BJ (cell line): ENCODE measurements at regions of chr17 and their contacts with region 1.

Region 1: DNA sequence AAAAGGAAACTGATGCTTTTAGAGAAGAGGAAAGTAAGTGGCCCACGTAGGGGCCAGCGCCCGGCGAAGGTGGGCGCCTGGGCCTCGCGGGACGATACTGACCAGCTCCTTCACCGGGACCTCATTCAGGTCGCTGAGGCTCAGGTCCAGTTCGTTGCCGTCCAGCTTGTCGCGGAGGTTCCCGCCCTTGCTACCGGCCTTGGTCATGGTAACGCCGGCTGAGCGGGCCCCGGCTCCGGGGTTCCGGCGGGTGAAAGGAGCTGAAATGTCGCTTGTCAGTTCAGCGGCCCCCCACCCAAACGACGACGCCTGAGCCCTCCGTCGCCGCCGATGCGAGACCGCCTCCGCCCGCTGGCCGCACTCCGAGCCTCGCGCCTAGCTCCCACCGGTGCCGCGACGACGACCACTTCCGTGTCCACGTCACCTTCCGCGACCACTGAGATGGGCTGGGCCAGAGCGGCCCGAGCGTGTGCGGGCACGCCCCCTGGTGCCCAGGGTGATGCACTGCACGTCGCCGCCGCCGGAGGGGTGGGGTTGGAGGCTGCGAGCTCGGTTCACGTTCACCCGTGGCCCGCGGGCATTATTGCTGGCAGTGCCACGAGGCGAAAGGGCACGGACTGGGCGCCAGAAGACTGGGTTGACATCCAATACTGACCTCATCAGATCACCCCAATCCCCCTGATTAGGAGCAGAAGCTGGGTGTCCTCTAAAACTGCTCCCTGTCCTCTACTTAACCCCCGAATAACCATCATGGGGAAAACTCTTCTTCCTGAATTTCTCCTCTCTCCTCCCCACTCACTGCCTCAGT is at the start of gene LRRC59:
- DNase-seq: peak; percentile 24
- H3K4me3 ChIP-seq: peak within 1 kb of the TSS; percentile 97
- H3K27me3 ChIP-seq: no peaks in the 10 kb centered on the region
- CTCF ChIP-seq: peak; percentile 98
- polyA plus RNA-seq, gene LRRC59: 110 and 119 TPM in 2 replicates

Region 2: GRCh38 chr17:50037321-50038071 is 359.8 kb before region 1 on chr17:
- CTCF ChIA-PET with region 1: no interaction called
- POLR2A ChIA-PET with region 1: no interaction called
- DNase-seq: no peak
- H3K4me3 ChIP-seq: no peak overlapping the region
- H3K27me3 ChIP-seq: no peaks in the 10 kb centered on the region
- CTCF ChIP-seq: no peak

Region 3: DNA sequence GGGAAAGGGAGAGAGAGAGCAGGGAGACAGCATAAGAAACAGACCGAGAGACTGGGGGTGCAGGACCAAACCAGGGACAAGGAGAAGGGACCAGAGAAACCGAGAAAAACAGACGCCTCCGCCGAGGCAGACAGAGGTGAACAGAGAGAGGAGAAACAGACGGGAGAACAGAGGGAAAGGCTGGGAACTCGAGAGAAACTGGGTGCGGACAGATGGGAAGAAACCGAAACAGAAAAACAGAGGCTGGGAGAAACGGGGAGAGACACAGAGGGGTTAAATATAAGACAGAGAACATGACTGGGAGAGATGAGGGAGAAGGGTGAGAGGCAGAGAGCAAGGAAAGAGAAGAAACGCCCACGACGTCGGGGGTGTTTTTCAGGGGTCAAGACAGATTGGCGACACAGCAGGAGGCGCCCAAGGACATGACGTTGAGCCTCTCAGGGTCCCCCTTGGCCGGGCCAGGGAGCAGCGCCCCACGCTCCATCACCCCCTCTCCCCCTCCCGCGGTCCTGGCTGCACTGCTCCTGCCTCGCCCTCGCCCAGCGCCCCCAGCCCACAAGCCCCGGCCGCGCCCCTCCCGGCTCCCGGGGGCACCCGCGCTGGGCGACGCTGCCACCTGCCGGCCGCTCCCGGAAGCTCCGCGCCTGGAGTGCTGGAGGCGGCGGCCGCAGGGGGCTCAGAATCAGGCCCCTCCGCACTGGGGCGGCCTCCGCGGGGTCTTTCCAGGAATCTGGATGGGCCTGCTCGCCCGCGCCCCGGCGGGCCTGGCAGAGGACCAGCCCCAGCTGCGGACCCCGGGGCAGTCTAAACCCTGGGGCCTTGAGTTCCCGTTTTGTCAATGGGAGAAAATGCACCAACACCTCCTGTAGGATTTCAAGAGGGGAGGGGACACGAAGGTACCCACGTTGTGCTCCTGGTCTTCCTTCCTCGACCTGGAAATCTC is 124.3 kb before region 1 on chr17:
- CTCF ChIA-PET with region 1: no interaction called
- POLR2A ChIA-PET with region 1: no interaction called
- DNase-seq: no peak
- H3K4me3 ChIP-seq: peak overlapping the region; percentile 51
- H3K27me3 ChIP-seq: no peaks in the 10 kb centered on the region
- CTCF ChIP-seq: peak; percentile 34; the same call in 1 of the 2 replicates

Region 4: GRCh38 chr17:50361561-50362480 is 35.5 kb before region 1 on chr17:
- CTCF ChIA-PET with region 1: interaction called, 12 read pairs
- POLR2A ChIA-PET with region 1: interaction called, 3 read pairs
- DNase-seq: no peak
- H3K4me3 ChIP-seq: no peak overlapping the region
- H3K27me3 ChIP-seq: no peaks in the 10 kb centered on the region
- CTCF ChIP-seq: peak; percentile 85

Region 5: DNA sequence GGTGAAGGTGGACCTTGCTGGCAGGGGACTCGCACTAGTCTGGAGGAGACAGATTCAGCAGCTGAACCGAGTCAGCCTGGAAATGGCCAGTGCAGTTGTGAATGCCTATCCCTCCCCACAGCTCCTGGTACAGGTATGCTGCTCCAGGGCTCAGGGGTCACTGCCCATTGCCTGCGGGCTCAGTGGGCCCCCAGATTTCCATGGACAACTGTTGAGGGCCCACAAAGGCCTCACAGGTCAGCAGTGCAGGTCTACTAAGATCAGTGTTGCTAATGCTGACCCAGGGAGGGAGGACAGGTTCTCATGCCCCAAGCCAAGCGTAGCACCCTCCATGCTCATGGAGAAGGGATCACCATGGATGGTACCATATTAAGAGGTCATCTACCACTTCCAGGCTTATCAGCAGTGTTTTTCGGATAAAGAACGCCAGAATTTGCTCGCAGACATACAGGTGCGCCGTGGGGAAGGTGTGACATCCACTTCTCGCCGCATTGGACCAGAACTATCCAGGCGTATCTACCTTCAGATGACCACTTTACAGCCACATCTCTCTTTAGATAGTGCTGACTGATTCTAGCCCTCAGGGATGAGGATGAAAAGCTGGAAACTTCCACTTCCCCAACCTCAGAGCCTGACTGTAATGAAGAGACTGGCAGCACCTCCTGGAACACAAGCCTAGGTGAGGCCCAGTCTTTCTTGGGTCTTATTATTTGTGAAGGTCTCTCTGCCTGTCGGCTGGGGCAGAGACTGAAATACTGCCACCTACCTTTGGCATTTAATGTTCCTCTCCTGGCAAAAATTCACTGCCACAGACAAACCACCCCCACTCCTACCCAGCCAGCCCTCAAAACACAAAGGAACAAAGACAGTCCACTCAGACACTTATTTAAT is 16.7 kb before region 1 on chr17:
- CTCF ChIA-PET with region 1: interaction called, 18 read pairs
- POLR2A ChIA-PET with region 1: interaction called, 5 read pairs
- DNase-seq: no peak
- H3K4me3 ChIP-seq: no peak overlapping the region
- H3K27me3 ChIP-seq: no peaks in the 10 kb centered on the region
- CTCF ChIP-seq: no peak

Region 6: DNA sequence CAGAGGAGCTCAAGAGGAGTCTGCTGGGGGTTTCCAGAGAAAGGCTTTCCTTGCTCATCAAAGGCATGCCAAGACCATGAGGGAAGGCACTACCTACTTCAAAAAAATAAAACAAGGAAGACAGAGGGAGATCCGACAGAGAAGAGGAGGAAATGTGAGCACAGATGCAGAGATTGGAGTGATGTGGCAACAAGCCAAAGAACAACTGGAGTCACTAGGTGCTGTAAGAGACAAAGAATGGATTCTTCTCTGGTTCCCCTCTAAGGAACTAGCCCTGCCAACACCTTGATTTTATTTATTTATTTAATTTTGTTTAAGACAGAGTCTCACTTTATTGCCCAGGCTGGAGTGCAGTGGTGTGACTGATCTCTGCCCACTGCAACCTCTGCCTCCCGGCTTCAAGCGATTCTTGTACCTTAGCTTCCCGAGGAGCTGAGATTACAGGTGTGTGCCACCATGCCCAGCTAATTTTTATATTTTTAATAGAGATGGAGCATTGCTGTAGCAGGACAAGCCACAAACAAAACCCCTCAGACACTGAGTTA is 14.9 kb after region 1 on chr17:
- CTCF ChIA-PET with region 1: interaction called, 25 read pairs
- POLR2A ChIA-PET with region 1: no interaction called
- DNase-seq: no peak
- H3K4me3 ChIP-seq: no peak overlapping the region
- H3K27me3 ChIP-seq: no peaks in the 10 kb centered on the region
- CTCF ChIP-seq: no peak

Region 7: DNA sequence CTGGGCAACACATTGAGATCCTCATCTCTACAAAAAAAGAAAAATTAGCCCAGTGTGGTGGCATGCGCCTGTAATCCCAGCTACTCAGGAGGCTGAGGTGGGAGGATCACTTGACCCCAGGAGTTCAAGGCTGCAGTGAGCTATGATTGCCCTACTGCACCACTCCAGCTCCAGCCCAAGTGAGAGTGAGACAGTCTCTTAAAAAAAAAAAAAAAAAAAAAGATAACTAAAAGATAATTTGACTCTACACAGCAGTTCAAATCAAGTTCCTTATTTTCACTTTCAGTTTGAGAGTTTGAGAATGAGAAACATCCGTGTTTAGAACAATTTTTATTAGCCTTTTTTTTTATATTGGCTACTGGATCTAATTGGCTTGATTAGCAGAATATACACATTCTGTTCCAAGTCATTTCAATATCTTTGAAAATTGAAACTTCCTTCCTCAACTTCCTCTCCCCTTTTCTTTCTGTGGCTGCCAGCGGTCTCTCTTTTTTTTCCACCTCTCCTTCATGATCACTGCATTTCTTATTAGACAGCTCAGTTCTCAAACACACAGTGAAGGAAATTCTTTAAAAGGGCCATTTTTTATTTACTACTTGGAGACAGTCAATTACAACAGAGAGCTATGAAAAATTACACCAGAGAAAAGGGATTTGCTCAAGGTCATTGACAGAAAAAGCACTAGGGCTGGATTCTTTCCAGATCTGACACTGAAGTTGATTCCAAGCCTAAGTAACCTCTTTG is 24.2 kb after region 1 on chr17:
- CTCF ChIA-PET with region 1: interaction called, 19 read pairs
- POLR2A ChIA-PET with region 1: no interaction called
- DNase-seq: no peak
- H3K4me3 ChIP-seq: no peak overlapping the region
- H3K27me3 ChIP-seq: no peaks in the 10 kb centered on the region
- CTCF ChIP-seq: no peak

Region 8: GRCh38 chr17:50478391-50479381 is 81.4 kb after region 1 on chr17 and contains the start of gene RSAD1:
- CTCF ChIA-PET with region 1: interaction called, 27 read pairs
- POLR2A ChIA-PET with region 1: no interaction called
- DNase-seq: no peak
- H3K4me3 ChIP-seq: peak within 1 kb of the TSS; percentile 55
- H3K27me3 ChIP-seq: peaks cover 2% of the 10 kb centered on the region; the same call in 1 of the 2 replicates
- CTCF ChIP-seq: peak; percentile 53
- polyA plus RNA-seq, gene RSAD1: 17.5 and 22.6 TPM in 2 replicates